ENCODE measurements at regions of chr19 and their contacts with region 1.

Region 1: DNA sequence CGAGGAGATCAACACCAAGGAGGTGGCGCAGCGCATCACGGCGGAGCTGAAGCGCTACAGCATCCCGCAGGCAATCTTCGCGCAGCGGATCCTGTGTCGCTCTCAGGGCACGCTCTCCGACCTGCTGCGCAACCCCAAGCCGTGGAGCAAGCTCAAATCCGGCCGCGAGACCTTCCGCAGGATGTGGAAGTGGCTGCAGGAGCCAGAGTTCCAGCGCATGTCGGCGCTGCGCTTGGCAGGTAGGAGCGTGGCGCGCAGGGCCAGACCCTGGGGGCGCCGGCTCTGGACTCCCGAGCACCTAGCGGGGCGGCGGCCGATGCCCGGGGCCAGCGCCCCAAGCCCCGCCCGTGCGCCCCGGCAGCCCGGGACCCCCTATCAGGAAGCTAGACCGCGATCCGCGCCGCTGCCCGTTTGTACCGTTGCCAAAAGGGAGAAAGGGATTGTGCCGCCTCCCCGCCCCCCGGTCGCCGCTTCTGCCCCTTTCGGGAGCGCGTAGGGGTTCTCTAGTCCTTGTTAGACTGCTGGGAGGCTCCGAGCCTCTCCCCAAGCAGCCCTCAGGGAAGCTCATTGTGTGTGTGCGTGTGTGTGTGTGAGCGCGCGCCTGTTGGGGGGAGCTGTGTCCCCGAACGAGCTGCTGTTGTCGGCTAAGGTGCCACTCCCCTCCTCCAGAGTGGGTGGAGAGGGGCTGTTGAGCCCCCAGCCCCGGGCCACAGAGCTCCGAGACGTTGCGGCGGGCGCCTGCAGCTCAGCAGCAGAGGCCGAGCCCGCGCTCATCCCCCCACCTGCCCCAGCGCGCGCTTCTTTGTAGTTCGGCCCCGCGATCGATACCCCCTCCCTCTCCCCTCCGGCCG is 1.5 kb downstream of the ONECUT3 start:
- DNase-seq: no peak
- ATAC-seq: no peak
- H3K4me3 ChIP-seq: no peak overlapping the region
- H3K4me3 Mint-ChIP-seq: peak overlapping the region in 3 of 10 donors; percentile 54 to 72 (median 63)
- H3K27ac ChIP-seq: no peak overlapping the region
- H3K27ac Mint-ChIP-seq: peak overlapping the region in 1 of 9 donors; percentile 71
- H3K4me1 ChIP-seq: peaks cover 1 to 6% of the 10 kb centered on the region in 2 donors
- H3K4me1 Mint-ChIP-seq: peaks cover 6 to 23% (median 15%) of the 10 kb centered on the region in 7 donors
- H3K27me3 ChIP-seq: peaks cover 19 to 31% of the 10 kb centered on the region in 2 donors
- H3K27me3 Mint-ChIP-seq: peaks cover 36 to 77% (median 44%) of the 10 kb centered on the region in 5 donors

Region 2: GRCh38 chr19:1465191-1466016 is 289.4 kb before region 1 on chr19:
- CTCF ChIA-PET with region 1: no interaction called
- POLR2A ChIA-PET with region 1: no interaction called
- intact Hi-C with region 1: loop called in 1 of 2 experiments (anchors 5 kb)
- DNase-seq: no peak
- ATAC-seq: peak; percentile 36
- H3K4me3 ChIP-seq: no peak overlapping the region
- H3K4me3 Mint-ChIP-seq: no peak overlapping the region
- H3K27ac ChIP-seq: no peak overlapping the region
- H3K27ac Mint-ChIP-seq: no peak overlapping the region
- H3K4me1 ChIP-seq: peaks cover 6 to 19% of the 10 kb centered on the region in 2 donors
- H3K4me1 Mint-ChIP-seq: peaks cover 0 to 6% (median 0%) of the 10 kb centered on the region in 7 donors
- H3K27me3 ChIP-seq: peaks cover 0 to 6% of the 10 kb centered on the region in 2 donors
- H3K27me3 Mint-ChIP-seq: peaks cover 0 to 4% (median 0%) of the 10 kb centered on the region in 5 donors

Region 3: DNA sequence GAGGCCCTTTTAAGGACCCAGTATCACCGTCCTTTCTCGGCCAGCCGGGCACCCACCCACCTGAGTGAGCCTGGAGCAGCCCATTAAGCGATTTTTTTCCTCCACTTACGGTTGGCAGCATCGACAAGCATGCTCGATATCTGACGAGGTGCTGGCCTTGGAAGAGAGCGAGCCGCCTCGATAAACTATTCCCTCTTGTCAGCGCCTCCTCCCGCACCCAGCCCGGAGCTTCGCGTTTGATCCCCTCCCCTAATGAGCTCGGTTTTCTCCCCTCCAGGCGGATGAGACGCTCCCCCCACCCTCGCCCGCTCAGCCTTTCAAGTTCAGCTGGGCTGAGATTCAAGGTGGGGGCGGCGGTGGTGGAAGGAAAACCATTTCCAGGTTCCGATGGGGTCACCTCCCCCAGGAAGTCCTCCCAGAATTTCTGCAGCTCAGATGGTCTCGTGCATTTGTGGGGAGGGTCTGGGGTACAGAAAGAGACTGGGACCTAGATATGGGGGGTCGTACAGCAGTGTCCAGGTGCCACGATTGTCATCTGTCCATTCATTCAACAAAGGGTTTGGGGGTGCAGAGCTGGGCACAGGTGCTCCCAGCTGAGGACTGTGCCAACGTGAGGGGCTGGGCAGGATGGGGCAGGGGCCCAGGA is 20.4 kb before region 1 on chr19:
- CTCF ChIA-PET with region 1: no interaction called
- POLR2A ChIA-PET with region 1: no interaction called
- intact Hi-C with region 1: no loop called
- DNase-seq: no peak
- ATAC-seq: no peak
- H3K4me3 ChIP-seq: no peak overlapping the region
- H3K4me3 Mint-ChIP-seq: no peak overlapping the region
- H3K27ac ChIP-seq: no peak overlapping the region
- H3K27ac Mint-ChIP-seq: no peak overlapping the region
- H3K4me1 ChIP-seq: no peaks in the 10 kb centered on the region
- H3K4me1 Mint-ChIP-seq: peaks cover 0 to 1% (median 0%) of the 10 kb centered on the region in 7 donors
- H3K27me3 ChIP-seq: peaks cover 0 to 3% of the 10 kb centered on the region in 2 donors
- H3K27me3 Mint-ChIP-seq: peaks cover 19 to 69% (median 36%) of the 10 kb centered on the region in 5 donors

Region 4: GRCh38 chr19:2840794-2841790 is 1086.3 kb after region 1 on chr19 and contains the start of gene ZNF555:
- CTCF ChIA-PET with region 1: no interaction called
- POLR2A ChIA-PET with region 1: no interaction called
- intact Hi-C with region 1: no loop called
- DNase-seq: peak; percentile 77 to 99 (median 97)
- ATAC-seq: peak; percentile 98
- H3K4me3 ChIP-seq: peak within 1 kb of the TSS; percentile 94
- H3K4me3 Mint-ChIP-seq: peak within 1 kb of the TSS; percentile 85 to 96 (median 92)
- H3K27ac ChIP-seq: peak within 1 kb of the TSS; percentile 75
- H3K27ac Mint-ChIP-seq: peak within 1 kb of the TSS; percentile 70 to 90 (median 82)
- H3K4me1 ChIP-seq: peaks cover 3 to 13% of the 10 kb centered on the region in 2 donors
- H3K4me1 Mint-ChIP-seq: peaks cover 5 to 33% (median 18%) of the 10 kb centered on the region in 7 donors
- H3K27me3 ChIP-seq: no peaks in the 10 kb centered on the region
- H3K27me3 Mint-ChIP-seq: peaks cover 0 to 7% (median 0%) of the 10 kb centered on the region in 5 donors
- total RNA-seq, gene ZNF555: 1.2 to 10.0 (median 2.7) TPM

Measured in naive thymus-derived CD4-positive, alpha-beta T cell (primary cell).